Activated CD4-positive, alpha-beta T cell treated with anti-CD3 and anti-CD28 coated beads, Interleukin-2, amount 10 ng/mL, durations not matched to agents 24 days and 14 days (primary cell): ENCODE measurements at regions of chr14 and their contacts with region 1.

Region 1: DNA sequence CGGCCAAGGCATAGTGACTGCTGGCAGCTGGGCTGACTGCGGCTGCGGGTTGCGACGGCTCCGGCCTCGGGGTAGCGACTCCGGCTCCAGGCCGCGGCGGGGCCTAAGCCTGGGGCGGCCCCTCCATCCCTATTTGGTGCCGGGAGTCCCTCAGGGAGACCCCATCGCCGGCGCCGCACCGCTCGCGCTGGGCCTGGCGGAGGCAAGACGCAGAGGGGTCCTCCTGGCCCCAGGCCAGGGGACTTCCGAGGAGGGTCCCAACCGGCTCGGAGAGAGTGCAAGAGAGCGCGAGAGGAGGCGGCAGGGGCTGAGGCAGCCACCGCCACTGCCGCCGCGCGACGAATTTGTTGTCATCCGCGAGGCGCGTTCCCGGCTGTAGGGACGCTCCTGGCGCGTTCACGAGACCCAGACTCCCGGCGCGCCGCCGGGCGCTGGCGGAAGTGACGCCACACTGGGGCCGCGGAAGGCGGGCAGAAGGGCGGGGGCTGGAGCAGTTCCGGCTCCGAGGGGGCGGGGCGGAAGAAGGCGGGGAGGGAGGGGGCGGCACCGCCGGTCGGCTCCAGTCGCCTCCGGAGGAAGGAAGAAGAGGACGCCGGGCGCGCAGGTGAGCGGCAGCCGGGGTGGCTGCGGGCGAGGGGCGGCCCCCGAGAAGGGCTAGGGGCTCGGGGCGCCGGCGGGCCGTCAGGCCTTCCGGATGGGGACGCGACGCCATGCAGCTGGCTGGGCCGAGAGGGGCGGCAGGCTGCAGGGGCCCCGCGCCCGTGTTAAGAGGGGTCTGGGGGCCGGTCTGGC is at the starts of genes ATG2B and GSKIP:
- DNase-seq: peak; percentile 99
- H3K4me3 Mint-ChIP-seq: peak within 1 kb of the TSS; percentile 96
- H3K27ac Mint-ChIP-seq: peak within 1 kb of the TSS; percentile 96
- H3K4me1 Mint-ChIP-seq: peaks cover 33% of the 10 kb centered on the region
- H3K27me3 Mint-ChIP-seq: no peaks in the 10 kb centered on the region
- total RNA-seq, gene ATG2B: 22.8 and 26.1 TPM in 2 replicates
- total RNA-seq, gene GSKIP: 16.3 and 19.3 TPM in 2 replicates

Region 2: DNA sequence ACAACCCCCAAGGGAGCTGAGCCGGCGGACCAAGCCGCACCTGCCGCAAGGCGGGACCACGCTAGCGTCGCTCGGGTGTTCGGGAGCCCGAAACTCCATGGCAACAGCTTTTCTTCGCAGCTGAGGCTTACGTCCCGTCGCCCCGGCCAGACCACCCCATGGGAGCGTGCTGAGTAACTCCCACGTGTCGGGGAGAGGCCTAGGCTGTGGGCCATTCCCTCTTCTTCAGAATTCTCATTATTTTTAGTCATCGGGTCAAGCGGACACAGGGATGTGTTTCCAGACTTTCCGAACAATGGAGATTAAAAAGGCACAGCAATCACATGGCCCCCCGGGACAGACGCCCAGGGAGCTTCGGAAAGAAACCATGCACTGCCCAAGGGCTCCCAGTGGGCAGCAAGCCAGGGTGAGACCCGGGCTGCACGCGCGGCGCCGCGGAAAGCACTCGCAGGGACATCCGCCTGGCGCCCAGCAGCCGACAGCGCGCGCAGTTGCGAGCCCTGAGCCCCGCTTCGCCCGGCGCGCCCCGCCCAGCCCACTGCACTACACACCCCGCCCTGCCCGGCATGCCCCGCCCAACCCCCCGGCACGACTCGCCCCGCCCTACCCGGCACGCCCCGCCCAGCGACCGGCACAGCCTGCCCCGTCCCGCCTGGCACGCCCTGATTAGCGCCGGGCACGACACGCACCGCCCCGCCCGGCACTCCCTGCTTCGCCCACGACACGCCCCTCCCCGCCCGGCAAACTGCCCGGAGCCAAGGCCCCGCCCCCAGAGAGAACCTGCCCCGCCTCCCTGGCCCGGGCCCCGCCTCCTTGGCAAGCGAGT is 28.3 kb after region 1 on chr14:
- intact Hi-C with region 1: loop called (anchors 1 kb)
- DNase-seq: peak; percentile 100
- H3K4me3 Mint-ChIP-seq: peak overlapping the region; percentile 91
- H3K27ac Mint-ChIP-seq: peak overlapping the region; percentile 77
- H3K4me1 Mint-ChIP-seq: peaks cover 9% of the 10 kb centered on the region
- H3K27me3 Mint-ChIP-seq: peaks cover 16% of the 10 kb centered on the region

Region 3: GRCh38 chr14:96508900-96509299 is 145.7 kb after region 1 on chr14:
- intact Hi-C with region 1: no loop called
- DNase-seq: no peak
- H3K4me3 Mint-ChIP-seq: no peak overlapping the region
- H3K27ac Mint-ChIP-seq: no peak overlapping the region
- H3K4me1 Mint-ChIP-seq: peaks cover 46% of the 10 kb centered on the region
- H3K27me3 Mint-ChIP-seq: no peaks in the 10 kb centered on the region

Region 4: DNA sequence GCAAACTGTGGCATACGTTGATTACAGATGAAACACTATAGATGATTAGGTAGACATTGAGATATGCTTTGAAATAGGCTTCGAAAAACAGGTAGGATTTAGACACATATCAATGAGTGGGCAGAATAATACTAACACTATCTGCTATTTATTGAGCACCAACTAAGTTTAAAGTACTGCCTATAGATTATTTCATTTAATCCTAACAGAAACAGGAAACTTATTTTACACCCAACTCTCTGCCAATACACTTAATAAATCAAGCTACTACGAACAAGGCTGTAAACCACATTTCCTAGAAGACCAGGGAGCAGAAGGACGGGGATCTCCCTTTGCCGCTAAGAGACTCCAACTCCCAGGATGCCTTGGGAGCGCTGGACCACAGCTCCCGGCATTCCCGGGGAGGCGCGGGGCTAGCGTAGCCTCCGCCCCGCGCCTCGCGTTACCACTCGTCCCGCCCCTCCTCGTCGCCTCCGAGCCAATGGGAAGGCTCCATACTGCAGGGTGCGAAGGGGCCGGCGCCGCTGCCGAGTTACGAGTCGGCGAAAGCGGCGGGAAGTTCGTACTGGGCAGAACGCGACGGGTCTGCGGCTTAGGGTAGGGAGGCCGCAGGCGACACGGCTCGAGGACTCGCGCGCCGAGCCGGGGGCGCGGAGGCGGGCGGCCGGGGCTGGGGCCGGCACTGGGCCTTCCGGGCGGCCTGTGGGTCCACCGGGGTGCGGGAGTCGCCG is 433.9 kb after region 1 on chr14 and contains the start of gene VRK1:
- intact Hi-C with region 1: loop called (anchors 5 kb)
- DNase-seq: peak; percentile 98
- H3K4me3 Mint-ChIP-seq: peak within 1 kb of the TSS; percentile 97
- H3K27ac Mint-ChIP-seq: peak within 1 kb of the TSS; percentile 93
- H3K4me1 Mint-ChIP-seq: peaks cover 29% of the 10 kb centered on the region
- H3K27me3 Mint-ChIP-seq: peaks cover 7% of the 10 kb centered on the region
- total RNA-seq, gene VRK1: 76.7 and 77.0 TPM in 2 replicates